Naive thymus-derived CD4-positive, alpha-beta T cell (primary cell): ENCODE measurements at regions of chr14 and their contacts with region 1.

Region 1: GRCh38 chr14:50109342-50109741 is 7.0 kb downstream of the VCPKMT start:
- DNase-seq: no peak
- ATAC-seq: no peak
- H3K4me3 ChIP-seq: no peak overlapping the region
- H3K4me3 Mint-ChIP-seq: no peak overlapping the region
- H3K27ac ChIP-seq: no peak overlapping the region
- H3K27ac Mint-ChIP-seq: no peak overlapping the region
- H3K4me1 ChIP-seq: peaks cover under 1 to 4% of the 10 kb centered on the region in 2 donors
- H3K4me1 Mint-ChIP-seq: peaks cover 0 to 21% (median 16%) of the 10 kb centered on the region in 7 donors
- H3K27me3 ChIP-seq: no peaks in the 10 kb centered on the region
- H3K27me3 Mint-ChIP-seq: no peaks in the 10 kb centered on the region

Region 2: GRCh38 chr14:49867831-49868723 is 241.3 kb before region 1 on chr14:
- CTCF ChIA-PET with region 1: interaction called, 34 read pairs
- POLR2A ChIA-PET with region 1: interaction called, 328 read pairs
- intact Hi-C with region 1: loop called (anchors 1 kb)
- DNase-seq: peak; percentile 87 to 97 (median 93)
- ATAC-seq: peak; percentile 96
- H3K4me3 ChIP-seq: peak overlapping the region; percentile 75
- H3K4me3 Mint-ChIP-seq: peak overlapping the region; percentile 79 to 95 (median 90)
- H3K27ac ChIP-seq: peak overlapping the region; percentile 91
- H3K27ac Mint-ChIP-seq: peak overlapping the region; percentile 93 to 99 (median 97)
- H3K4me1 ChIP-seq: peaks cover 31 to 35% of the 10 kb centered on the region in 2 donors
- H3K4me1 Mint-ChIP-seq: peaks cover 9 to 31% (median 17%) of the 10 kb centered on the region in 7 donors
- H3K27me3 ChIP-seq: no peaks in the 10 kb centered on the region
- H3K27me3 Mint-ChIP-seq: no peaks in the 10 kb centered on the region

Region 3: DNA sequence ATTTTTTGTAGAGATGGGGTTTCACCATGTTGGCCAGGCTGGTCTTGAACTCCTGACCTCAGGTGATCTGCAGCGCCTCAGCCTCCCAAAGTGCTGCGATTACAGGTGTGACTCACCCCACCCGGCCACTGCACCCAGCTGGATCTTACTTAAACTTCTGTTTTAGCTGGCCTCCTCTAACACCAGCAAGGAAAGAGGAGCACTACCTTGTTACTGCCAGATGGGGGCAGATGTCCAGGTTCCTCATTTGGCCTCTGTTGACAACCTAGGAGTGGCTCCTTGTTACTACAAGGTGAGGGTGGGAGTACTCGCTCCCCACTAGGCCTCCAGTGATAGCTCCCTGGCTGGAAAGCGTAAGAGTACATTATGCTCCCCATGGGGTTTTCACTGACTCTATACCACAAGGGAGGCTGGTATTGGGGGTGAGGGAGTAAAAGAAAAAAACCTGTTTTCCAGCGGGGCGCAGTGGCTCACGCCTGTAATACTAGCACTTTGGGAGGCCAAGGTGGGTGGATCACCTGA is 229.6 kb before region 1 on chr14:
- CTCF ChIA-PET with region 1: interaction called, 12 read pairs
- POLR2A ChIA-PET with region 1: interaction called, 4 read pairs
- intact Hi-C with region 1: loop called (anchors 1 kb)
- DNase-seq: peak in 8 of 9 donors; percentile 32 to 64 (median 48)
- ATAC-seq: peak; percentile 92
- H3K4me3 ChIP-seq: no peak overlapping the region
- H3K4me3 Mint-ChIP-seq: no peak overlapping the region
- H3K27ac ChIP-seq: no peak overlapping the region
- H3K27ac Mint-ChIP-seq: peak overlapping the region in 6 of 9 donors; percentile 17 to 74 (median 44)
- H3K4me1 ChIP-seq: peaks cover 0 to 6% of the 10 kb centered on the region in 2 donors
- H3K4me1 Mint-ChIP-seq: peaks cover 10 to 30% (median 12%) of the 10 kb centered on the region in 7 donors
- H3K27me3 ChIP-seq: no peaks in the 10 kb centered on the region
- H3K27me3 Mint-ChIP-seq: peaks cover 0 to 3% (median 0%) of the 10 kb centered on the region in 5 donors

Region 4: DNA sequence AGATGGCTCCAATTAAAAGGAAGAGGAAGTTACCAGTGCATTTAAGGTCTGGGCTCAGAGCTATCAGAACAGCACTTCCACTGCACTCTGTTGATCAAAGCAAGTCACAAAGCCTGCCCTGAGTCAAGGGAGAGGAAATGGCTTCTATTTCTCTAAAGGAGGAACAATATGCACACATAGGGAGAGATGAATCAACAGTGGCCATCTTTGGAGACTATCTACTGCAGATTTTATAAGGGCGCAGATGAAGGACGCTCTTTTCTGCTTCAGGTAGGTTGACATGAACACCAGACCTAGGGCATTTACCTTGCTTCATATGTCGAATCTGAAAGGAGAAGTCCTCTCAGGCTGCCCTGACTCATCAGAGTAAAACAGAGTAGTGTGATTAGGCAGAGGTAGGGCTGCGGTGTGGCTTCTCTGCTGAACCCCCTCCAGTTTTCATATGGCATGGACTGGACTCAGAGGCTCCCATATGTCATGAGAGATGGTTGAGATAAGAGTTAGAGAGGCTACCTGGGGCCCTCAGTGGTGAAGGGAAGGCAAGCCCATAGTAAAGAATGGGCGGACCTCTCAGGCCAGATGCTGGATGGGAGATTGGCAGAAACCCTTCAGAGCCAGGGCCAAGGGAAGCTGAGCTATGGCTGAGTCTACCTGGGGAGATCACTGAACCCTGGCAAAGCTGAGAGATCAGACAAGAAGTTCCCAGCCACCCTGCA is 132.1 kb before region 1 on chr14:
- CTCF ChIA-PET with region 1: interaction called, 4 read pairs
- POLR2A ChIA-PET with region 1: interaction called, 4 read pairs
- intact Hi-C with region 1: loop called in 1 of 2 experiments (anchors 1 kb)
- DNase-seq: peak in 8 of 9 donors; percentile 33 to 77 (median 64)
- ATAC-seq: peak; percentile 87
- H3K4me3 ChIP-seq: peak overlapping the region; percentile 58
- H3K4me3 Mint-ChIP-seq: peak overlapping the region; percentile 64 to 85 (median 80)
- H3K27ac ChIP-seq: peak overlapping the region; percentile 71
- H3K27ac Mint-ChIP-seq: peak overlapping the region; percentile 88 to 99 (median 97)
- H3K4me1 ChIP-seq: peaks cover 44 to 76% of the 10 kb centered on the region in 2 donors
- H3K4me1 Mint-ChIP-seq: peaks cover 58 to 99% (median 85%) of the 10 kb centered on the region in 7 donors
- H3K27me3 ChIP-seq: no peaks in the 10 kb centered on the region
- H3K27me3 Mint-ChIP-seq: no peaks in the 10 kb centered on the region

Region 5: GRCh38 chr14:50038398-50039119 is 70.8 kb before region 1 on chr14:
- CTCF ChIA-PET with region 1: interaction called, 8 read pairs
- POLR2A ChIA-PET with region 1: interaction called, 5 read pairs
- intact Hi-C with region 1: loop called in 1 of 2 experiments (anchors 1 kb)
- DNase-seq: peak in 1 of 9 donors; percentile 69
- ATAC-seq: peak; percentile 79
- H3K4me3 ChIP-seq: no peak overlapping the region
- H3K4me3 Mint-ChIP-seq: peak overlapping the region in 3 of 10 donors; percentile 40 to 59 (median 53)
- H3K27ac ChIP-seq: no peak overlapping the region
- H3K27ac Mint-ChIP-seq: peak overlapping the region in 8 of 9 donors; percentile 36 to 95 (median 83)
- H3K4me1 ChIP-seq: peaks cover 46 to 52% of the 10 kb centered on the region in 2 donors
- H3K4me1 Mint-ChIP-seq: peaks cover 33 to 68% (median 54%) of the 10 kb centered on the region in 7 donors
- H3K27me3 ChIP-seq: no peaks in the 10 kb centered on the region
- H3K27me3 Mint-ChIP-seq: no peaks in the 10 kb centered on the region

Region 6: DNA sequence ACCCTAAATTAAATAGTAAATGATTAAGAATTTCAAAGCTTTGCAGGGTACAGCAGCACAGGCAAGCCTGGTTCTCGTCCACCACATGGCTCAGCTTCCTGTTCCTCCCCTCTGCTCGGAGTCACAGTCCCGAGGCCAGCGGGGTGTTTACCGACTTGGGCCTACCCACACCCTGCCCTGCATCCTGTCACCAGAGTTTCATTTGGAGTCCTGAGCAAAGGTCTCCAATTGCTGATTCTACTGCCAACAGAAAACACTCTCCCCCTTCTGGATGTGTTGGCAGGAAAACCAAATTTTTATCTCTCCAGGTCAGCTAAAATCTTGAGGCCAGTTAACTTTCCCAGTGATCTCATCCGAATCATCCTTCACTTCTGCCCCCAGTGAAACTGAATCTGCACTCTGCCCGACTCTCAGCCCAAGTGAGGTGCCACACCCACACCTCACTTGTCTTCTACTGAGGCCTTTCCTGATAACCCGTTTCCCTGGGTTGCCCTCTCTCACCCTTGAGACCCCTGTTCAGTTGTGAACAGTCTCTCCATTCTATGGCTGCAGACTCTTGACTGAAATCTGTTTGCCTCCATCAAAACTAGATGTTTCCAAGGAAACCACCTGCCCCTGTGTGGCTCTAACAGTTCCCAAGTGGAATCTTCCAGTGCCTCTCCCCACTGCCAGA is 64.2 kb before region 1 on chr14:
- CTCF ChIA-PET with region 1: interaction called, 8 read pairs
- POLR2A ChIA-PET with region 1: interaction called, 5 read pairs
- intact Hi-C with region 1: loop called (anchors 1 to 2 kb)
- DNase-seq: peak in 8 of 9 donors; percentile 39 to 74 (median 62)
- ATAC-seq: peak; percentile 86
- H3K4me3 ChIP-seq: no peak overlapping the region
- H3K4me3 Mint-ChIP-seq: peak overlapping the region; percentile 50 to 89 (median 74)
- H3K27ac ChIP-seq: peak overlapping the region; percentile 69
- H3K27ac Mint-ChIP-seq: peak overlapping the region; percentile 88 to 99 (median 96)
- H3K4me1 ChIP-seq: peaks cover 51 to 63% of the 10 kb centered on the region in 2 donors
- H3K4me1 Mint-ChIP-seq: peaks cover 49 to 83% (median 71%) of the 10 kb centered on the region in 7 donors
- H3K27me3 ChIP-seq: no peaks in the 10 kb centered on the region
- H3K27me3 Mint-ChIP-seq: no peaks in the 10 kb centered on the region

Region 7: DNA sequence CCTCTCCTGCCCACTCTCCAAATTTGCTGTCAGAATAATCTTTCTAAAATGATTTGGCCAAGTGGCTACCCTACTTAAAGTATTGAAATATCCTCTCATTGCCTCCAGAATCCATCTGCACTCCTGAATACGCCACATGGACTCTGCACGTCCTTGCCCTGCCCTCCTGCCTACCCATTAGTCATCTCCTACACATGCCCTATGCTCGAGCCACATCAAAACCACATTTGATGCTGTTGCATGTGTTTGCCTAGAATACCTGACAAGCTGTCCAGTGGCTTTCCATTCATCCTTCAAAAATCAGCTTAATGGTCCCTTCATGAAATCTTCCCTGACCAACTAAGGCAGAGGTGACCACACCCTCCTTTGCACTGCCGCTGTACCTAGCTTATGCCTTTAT is 10.0 kb before region 1 on chr14:
- CTCF ChIA-PET with region 1: interaction called, 5 read pairs
- POLR2A ChIA-PET with region 1: interaction called, 7 read pairs
- intact Hi-C with region 1: loop called in 1 of 2 experiments (anchors 1 kb)
- DNase-seq: no peak
- ATAC-seq: no peak
- H3K4me3 ChIP-seq: no peak overlapping the region
- H3K4me3 Mint-ChIP-seq: peak overlapping the region in 9 of 10 donors; percentile 9 to 61 (median 38)
- H3K27ac ChIP-seq: no peak overlapping the region
- H3K27ac Mint-ChIP-seq: peak overlapping the region; percentile 13 to 87 (median 79)
- H3K4me1 ChIP-seq: peaks cover 23 to 67% of the 10 kb centered on the region in 2 donors
- H3K4me1 Mint-ChIP-seq: peaks cover 39 to 92% (median 76%) of the 10 kb centered on the region in 7 donors
- H3K27me3 ChIP-seq: no peaks in the 10 kb centered on the region
- H3K27me3 Mint-ChIP-seq: peaks cover 0 to 5% (median 0%) of the 10 kb centered on the region in 5 donors

Region 8: DNA sequence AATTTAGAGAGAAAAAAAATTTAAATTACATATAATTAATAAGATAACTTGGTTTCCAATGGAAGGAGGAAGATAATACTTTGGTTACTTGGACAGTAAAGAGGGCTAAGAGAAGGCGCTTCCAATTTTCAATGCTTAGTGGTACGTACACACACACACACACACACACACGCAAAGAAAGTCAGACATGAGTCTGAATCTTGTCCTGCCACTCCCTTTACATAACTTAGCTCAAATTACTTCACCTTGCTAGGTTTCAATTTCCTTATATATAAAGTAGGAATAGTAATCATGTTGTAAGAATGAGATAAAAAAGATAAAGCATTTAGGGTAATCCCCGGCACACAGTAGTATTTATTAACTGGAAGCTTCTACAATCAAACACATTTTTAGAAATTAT is 46.8 kb after region 1 on chr14:
- CTCF ChIA-PET with region 1: no interaction called
- POLR2A ChIA-PET with region 1: no interaction called
- intact Hi-C with region 1: no loop called
- DNase-seq: no peak
- ATAC-seq: no peak
- H3K4me3 ChIP-seq: no peak overlapping the region
- H3K4me3 Mint-ChIP-seq: no peak overlapping the region
- H3K27ac ChIP-seq: no peak overlapping the region
- H3K27ac Mint-ChIP-seq: peak overlapping the region in 1 of 9 donors; percentile 4
- H3K4me1 ChIP-seq: no peaks in the 10 kb centered on the region
- H3K4me1 Mint-ChIP-seq: peaks cover 0 to 2% (median 0%) of the 10 kb centered on the region in 7 donors
- H3K27me3 ChIP-seq: no peaks in the 10 kb centered on the region
- H3K27me3 Mint-ChIP-seq: no peaks in the 10 kb centered on the region

Region 9: GRCh38 chr14:50383618-50384225 is 274.4 kb after region 1 on chr14:
- CTCF ChIA-PET with region 1: no interaction called
- POLR2A ChIA-PET with region 1: no interaction called
- intact Hi-C with region 1: no loop called
- DNase-seq: no peak
- ATAC-seq: no peak
- H3K4me3 ChIP-seq: no peak overlapping the region
- H3K4me3 Mint-ChIP-seq: no peak overlapping the region
- H3K27ac ChIP-seq: no peak overlapping the region
- H3K27ac Mint-ChIP-seq: no peak overlapping the region
- H3K4me1 ChIP-seq: no peaks in the 10 kb centered on the region
- H3K4me1 Mint-ChIP-seq: no peaks in the 10 kb centered on the region
- H3K27me3 ChIP-seq: no peaks in the 10 kb centered on the region
- H3K27me3 Mint-ChIP-seq: no peaks in the 10 kb centered on the region